ENCODE measurements at regions of chr3 and their contacts with region 1.

Region 1: GRCh38 chr3:129160891-129161859 is at the start of gene ISY1:
- DNase-seq: peak; percentile 75 to 93 (median 83)
- ATAC-seq: peak; percentile 84
- H3K4me3 ChIP-seq: peak within 1 kb of the TSS; percentile 67
- H3K27ac ChIP-seq: peak within 1 kb of the TSS; percentile 100
- H3K4me1 ChIP-seq: peaks cover 0 to 11% of the 10 kb centered on the region in 2 experiments; a peak in 3 of 5 replicates
- H3K27me3 ChIP-seq: no peaks in the 10 kb centered on the region
- CTCF ChIP-seq: peak; percentile 75 to 82 (median 81)
- EP300 ChIP-seq: no peak
- POLR2A ChIP-seq: peak; percentile 93
- RAD21 ChIP-seq: peak in 1 of 2 experiments; percentile 37; a peak in 3 of 4 replicates
- polyA plus RNA-seq, gene ISY1: 41.9 to 50.0 TPM

Region 2: GRCh38 chr3:128665362-128666038 is 495.7 kb before region 1 on chr3:
- CTCF ChIA-PET with region 1: no interaction called
- POLR2A ChIA-PET with region 1: no interaction called
- in situ Hi-C with region 1: no loop called
- intact Hi-C with region 1: no loop called
- DNase-seq: no peak
- ATAC-seq: peak; percentile 67
- H3K4me3 ChIP-seq: no peak overlapping the region
- H3K27ac ChIP-seq: no peak overlapping the region
- H3K4me1 ChIP-seq: no peaks in the 10 kb centered on the region; a peak in 1 of 5 replicates
- H3K27me3 ChIP-seq: no peaks in the 10 kb centered on the region
- CTCF ChIP-seq: peak in 2 of 3 experiments; percentile 9 to 53; a peak in 2 of 6 replicates
- EP300 ChIP-seq: no peak
- POLR2A ChIP-seq: no peak
- RAD21 ChIP-seq: peak; percentile 32 to 49; a peak in 2 of 4 replicates

Region 3: DNA sequence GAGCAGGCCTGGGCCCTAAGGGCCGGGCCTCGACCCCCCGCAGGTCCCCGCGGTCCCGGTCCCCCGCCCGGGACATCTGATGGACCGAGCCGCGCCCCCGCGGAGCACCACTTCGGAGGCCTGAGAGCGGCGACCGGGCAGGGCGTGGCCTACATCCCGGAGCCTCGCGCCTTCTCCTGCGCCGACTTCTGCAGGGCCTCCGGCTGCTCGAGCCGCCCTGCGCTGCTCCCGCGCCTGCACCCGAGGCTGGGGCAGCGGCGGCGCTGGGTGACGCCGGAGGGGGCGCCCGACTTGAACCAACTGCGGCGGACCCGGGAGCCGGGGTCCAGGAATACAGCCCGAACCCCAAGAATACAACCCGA is 115.5 kb before region 1 on chr3:
- CTCF ChIA-PET with region 1: no interaction called
- POLR2A ChIA-PET with region 1: no interaction called
- in situ Hi-C with region 1: no loop called
- intact Hi-C with region 1: no loop called
- DNase-seq: no peak
- ATAC-seq: no peak
- H3K4me3 ChIP-seq: no peak overlapping the region
- H3K27ac ChIP-seq: no peak overlapping the region
- H3K4me1 ChIP-seq: peaks cover 0 to 3% of the 10 kb centered on the region in 2 experiments; a peak in 1 of 5 replicates
- H3K27me3 ChIP-seq: no peaks in the 10 kb centered on the region
- CTCF ChIP-seq: no peak
- EP300 ChIP-seq: no peak
- POLR2A ChIP-seq: no peak
- RAD21 ChIP-seq: no peak

Region 4: GRCh38 chr3:129121792-129122411 is 39.3 kb before region 1 on chr3 and contains the start of gene RAB43:
- CTCF ChIA-PET with region 1: no interaction called
- POLR2A ChIA-PET with region 1: interaction called, 10 read pairs
- in situ Hi-C with region 1: no loop called
- intact Hi-C with region 1: no loop called
- DNase-seq: peak; percentile 83 to 97 (median 95)
- ATAC-seq: peak; percentile 86
- H3K4me3 ChIP-seq: peak within 1 kb of the TSS; percentile 58
- H3K27ac ChIP-seq: peak within 1 kb of the TSS; percentile 75
- H3K4me1 ChIP-seq: peaks cover 15 to 30% of the 10 kb centered on the region in 2 experiments; a peak in 4 of 5 replicates
- H3K27me3 ChIP-seq: no peaks in the 10 kb centered on the region
- CTCF ChIP-seq: no peak
- EP300 ChIP-seq: no peak
- POLR2A ChIP-seq: no peak
- RAD21 ChIP-seq: no peak
- polyA plus RNA-seq, gene RAB43: 0.04 to 0.07 TPM